ENCODE measurements at regions of chr11 and their contacts with region 1.

Region 1: GRCh38 chr11:120324932-120325810 is at the start of gene TLCD5:
- DNase-seq: peak; percentile 70 to 91
- H3K4me3 ChIP-seq: peak within 1 kb of the TSS; percentile 58 to 74 (median 68)
- H3K27ac ChIP-seq: peak within 1 kb of the TSS; percentile 16; the same call in 1 of the 2 replicates
- H3K4me1 ChIP-seq: peaks cover 0 to 3% (median 0%) of the 10 kb centered on the region in 4 experiments; a peak in 3 of 7 replicates
- H3K27me3 ChIP-seq: no peaks in the 10 kb centered on the region
- CTCF ChIP-seq: peak; percentile 19 to 59 (median 30)
- EP300 ChIP-seq: no peak
- POLR2A ChIP-seq: peak in 1 of 2 experiments; percentile 68; a peak in 2 of 3 replicates
- RAD21 ChIP-seq: peak in 1 of 2 experiments; percentile 22; a peak in 1 of 4 replicates
- total RNA-seq, gene TLCD5: 9.5 TPM in 2 replicates

Region 2: DNA sequence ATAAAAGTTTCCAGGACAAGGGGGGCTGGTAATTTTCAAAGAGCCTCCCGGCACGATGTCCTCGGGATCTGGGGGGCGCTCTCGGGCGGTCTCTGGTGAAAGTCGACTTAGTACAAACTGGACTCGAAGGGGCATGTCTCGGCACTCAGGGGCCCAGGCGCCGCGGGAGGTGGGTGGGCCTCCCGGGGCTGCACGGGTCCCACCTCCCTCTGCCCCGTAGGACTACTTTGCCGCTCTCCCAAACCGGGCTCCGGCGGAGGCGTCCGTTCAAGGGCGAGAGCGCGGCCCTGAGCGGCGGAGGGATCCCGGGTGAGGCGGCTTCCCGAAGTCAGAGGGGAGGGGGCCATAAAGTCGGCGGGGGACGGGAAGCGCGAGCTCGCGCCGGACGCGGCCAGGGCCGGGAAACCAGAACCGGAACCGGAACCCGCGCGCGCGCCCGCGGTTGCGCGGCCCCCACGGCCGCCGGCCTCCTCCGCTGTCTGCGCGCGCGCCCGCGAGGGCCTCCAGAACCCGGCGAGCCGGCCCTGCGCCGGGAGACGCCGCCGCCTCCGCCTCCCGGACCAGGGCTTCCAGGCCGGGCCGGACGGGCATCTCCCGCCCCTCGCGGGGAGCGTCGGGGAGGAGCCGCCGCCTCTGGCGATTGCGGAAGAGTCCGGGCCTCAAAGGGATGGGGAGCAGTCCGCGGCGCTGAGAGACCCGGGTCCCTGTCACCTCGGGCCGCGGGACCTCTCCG is 10.9 kb after region 1 on chr11 and contains the start of gene ARHGEF12:
- CTCF ChIA-PET with region 1: interaction called, 19 read pairs
- POLR2A ChIA-PET with region 1: interaction called, 27 read pairs
- DNase-seq: peak; percentile 82 to 92
- H3K4me3 ChIP-seq: peak within 1 kb of the TSS; percentile 89 to 98 (median 96)
- H3K27ac ChIP-seq: peak within 1 kb of the TSS; percentile 53
- H3K4me1 ChIP-seq: peaks cover 0 to 8% (median 5%) of the 10 kb centered on the region in 4 experiments; a peak in 6 of 7 replicates
- H3K27me3 ChIP-seq: no peaks in the 10 kb centered on the region
- CTCF ChIP-seq: peak in 2 of 3 experiments; percentile 1 to 17; a peak in 1 of 4 replicates
- EP300 ChIP-seq: peak in 1 of 2 experiments; percentile 72; a peak in 1 of 3 replicates
- POLR2A ChIP-seq: peak in 1 of 2 experiments; percentile 17; a peak in 1 of 3 replicates
- RAD21 ChIP-seq: no peak
- total RNA-seq, gene ARHGEF12: 31.2 and 33.7 TPM in 2 replicates

Measured in H1 (cell line).